ENCODE measurements at regions of chr9 and their contacts with region 1.

Region 1: GRCh38 chr9:16726718-16727451 is 143.6 kb downstream of the BNC2 start:
- DNase-seq: peak in 1 of 9 experiments; percentile 1
- ATAC-seq: no peak
- H3K4me3 ChIP-seq: no peak overlapping the region
- H3K4me3 Mint-ChIP-seq: no peak overlapping the region
- H3K27ac ChIP-seq: no peak overlapping the region
- H3K27ac Mint-ChIP-seq: no peak overlapping the region
- H3K4me1 ChIP-seq: no peaks in the 10 kb centered on the region
- H3K4me1 Mint-ChIP-seq: peaks cover 7% of the 10 kb centered on the region
- H3K27me3 ChIP-seq: peaks cover 0 to 3% of the 10 kb centered on the region in 2 experiments
- H3K27me3 Mint-ChIP-seq: peaks cover 37% of the 10 kb centered on the region
- CTCF ChIP-seq: no peak

Region 2: DNA sequence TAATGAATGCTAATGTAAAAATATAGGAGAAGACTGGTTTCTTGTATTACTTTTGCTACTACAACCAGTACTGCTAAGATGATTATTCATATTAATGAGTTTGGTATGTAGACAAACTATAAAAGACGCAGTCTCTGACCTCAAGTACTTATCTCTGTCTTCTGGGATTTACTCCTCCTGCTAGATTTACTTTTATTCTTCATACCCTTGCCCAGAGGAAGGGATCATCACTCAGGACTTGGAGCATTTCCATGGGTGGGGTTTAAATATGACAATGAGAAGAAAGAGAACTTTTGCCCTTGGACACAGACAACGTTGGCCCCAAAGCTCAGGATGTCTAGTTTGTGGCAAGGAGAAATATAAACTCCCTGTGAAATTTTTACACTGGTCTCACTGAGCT is 17.5 kb after region 1 on chr9:
- CTCF ChIA-PET with region 1: interaction called, 3 read pairs
- POLR2A ChIA-PET with region 1: no interaction called
- intact Hi-C with region 1: loop called in 1 of 2 experiments (anchors 2 kb)
- DNase-seq: no peak
- ATAC-seq: no peak
- H3K4me3 ChIP-seq: no peak overlapping the region
- H3K4me3 Mint-ChIP-seq: no peak overlapping the region
- H3K27ac ChIP-seq: no peak overlapping the region
- H3K27ac Mint-ChIP-seq: no peak overlapping the region
- H3K4me1 ChIP-seq: no peaks in the 10 kb centered on the region
- H3K4me1 Mint-ChIP-seq: no peaks in the 10 kb centered on the region
- H3K27me3 ChIP-seq: no peaks in the 10 kb centered on the region
- H3K27me3 Mint-ChIP-seq: no peaks in the 10 kb centered on the region
- CTCF ChIP-seq: no peak

Measured in CD8-positive, alpha-beta T cell (primary cell).